PC-3 (cell line): ENCODE measurements at regions of chr11 and their contacts with region 1.

Region 1: GRCh38 chr11:31240338-31240904 is 129.1 kb downstream of the DCDC1 start:
- DNase-seq: peak; percentile 63
- ATAC-seq: peak; percentile 71
- H3K4me3 ChIP-seq: no peak overlapping the region
- H3K27ac ChIP-seq: no peak overlapping the region
- H3K4me1 ChIP-seq: no peaks in the 10 kb centered on the region
- H3K27me3 ChIP-seq: peaks cover 13% of the 10 kb centered on the region
- CTCF ChIP-seq: peak; percentile 75

Region 2: GRCh38 chr11:30917859-30918478 is 322.5 kb before region 1 on chr11:
- CTCF ChIA-PET with region 1: no interaction called
- POLR2A ChIA-PET with region 1: no interaction called
- intact Hi-C with region 1: no loop called
- DNase-seq: peak; percentile 69
- ATAC-seq: peak; percentile 53; the same call in 1 of the 2 replicates
- H3K4me3 ChIP-seq: no peak overlapping the region
- H3K27ac ChIP-seq: no peak overlapping the region
- H3K4me1 ChIP-seq: no peaks in the 10 kb centered on the region
- H3K27me3 ChIP-seq: no peaks in the 10 kb centered on the region; the same call in 1 of the 2 replicates
- CTCF ChIP-seq: peak; percentile 73

Region 3: DNA sequence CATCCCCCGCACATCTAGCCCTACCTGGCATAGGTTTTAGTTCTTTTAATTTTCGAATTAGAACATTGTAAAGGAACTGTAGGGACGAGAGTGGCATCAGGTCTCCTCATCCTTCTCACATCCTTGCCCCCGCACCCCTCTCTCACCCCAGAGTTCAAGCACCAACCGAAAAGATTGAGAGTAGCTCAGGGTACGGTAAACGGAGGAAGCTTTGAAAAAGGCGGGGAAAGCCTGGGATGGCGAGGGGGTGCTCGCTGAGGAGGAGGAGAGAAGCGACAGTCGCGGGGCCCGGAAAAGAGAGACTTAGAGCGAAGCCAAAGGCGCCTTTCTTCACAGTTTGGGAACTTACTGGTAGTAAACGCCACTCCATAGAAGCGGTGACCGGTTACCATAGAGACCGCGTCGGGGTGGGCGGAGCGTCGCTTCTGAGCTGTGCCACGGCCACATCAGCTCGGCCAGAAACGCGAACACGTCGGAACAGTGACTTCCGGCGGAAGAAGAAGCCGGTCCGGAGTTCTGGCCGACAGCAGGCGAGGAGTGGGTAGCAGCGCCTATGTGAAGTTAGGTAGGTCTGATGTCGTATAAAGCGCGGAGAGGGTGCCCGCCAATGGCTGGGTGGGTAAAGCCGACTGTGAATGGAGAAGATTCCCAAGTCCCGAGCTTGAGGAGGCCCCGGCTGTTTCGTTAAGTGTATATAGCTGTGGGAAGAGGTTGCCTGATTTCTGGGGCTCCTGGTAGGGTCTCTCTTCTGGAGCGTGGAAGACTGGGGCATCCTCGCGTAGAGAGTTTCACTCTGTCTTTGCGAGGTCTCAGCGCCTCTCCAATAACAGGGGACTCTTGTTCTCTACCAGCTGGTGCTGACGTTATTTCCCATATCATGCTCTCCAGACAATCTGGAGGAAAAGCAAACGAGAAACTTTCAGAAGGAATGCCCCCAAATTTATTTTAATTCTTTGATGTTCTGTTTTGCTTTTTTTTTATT is 129.2 kb after region 1 on chr11 and contains the starts of genes DCDC1 and DNAJC24:
- CTCF ChIA-PET with region 1: no interaction called
- POLR2A ChIA-PET with region 1: interaction called, 3 read pairs
- intact Hi-C with region 1: loop called (anchors 5 kb)
- DNase-seq: peak; percentile 93
- ATAC-seq: peak; percentile 96
- H3K4me3 ChIP-seq: peak within 1 kb of the TSS; percentile 84
- H3K27ac ChIP-seq: no peak within 1 kb of the TSS
- H3K4me1 ChIP-seq: peaks cover 6% of the 10 kb centered on the region
- H3K27me3 ChIP-seq: peaks cover 12% of the 10 kb centered on the region
- CTCF ChIP-seq: no peak
- total RNA-seq, gene DCDC1: 0.75 TPM in 1 of 2 replicates, not detected in the other
- total RNA-seq, gene DNAJC24: 5.6 and 9.3 TPM in 2 replicates

Region 4: DNA sequence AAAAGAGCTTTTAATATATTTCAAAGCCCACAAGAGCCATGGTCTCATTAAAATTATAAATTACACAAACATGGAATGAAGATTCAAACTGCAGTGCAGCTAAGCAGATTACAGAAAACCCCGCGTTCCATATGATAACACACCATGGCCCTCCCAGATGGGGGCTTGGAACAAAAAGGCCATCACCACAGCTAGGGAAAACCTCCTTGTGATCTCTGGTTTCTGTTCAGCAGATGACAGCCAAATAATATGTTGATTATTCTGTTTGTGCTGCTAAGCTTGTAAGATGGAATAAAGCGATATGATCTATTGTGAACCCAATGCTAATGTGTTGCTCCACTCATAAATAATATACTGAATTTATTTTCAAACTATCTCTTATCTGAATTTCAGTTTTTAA is 240.5 kb after region 1 on chr11:
- CTCF ChIA-PET with region 1: no interaction called
- POLR2A ChIA-PET with region 1: no interaction called
- intact Hi-C with region 1: loop called (anchors 5 kb)
- DNase-seq: no peak
- ATAC-seq: no peak
- H3K4me3 ChIP-seq: no peak overlapping the region
- H3K27ac ChIP-seq: no peak overlapping the region
- H3K4me1 ChIP-seq: no peaks in the 10 kb centered on the region
- H3K27me3 ChIP-seq: no peaks in the 10 kb centered on the region
- CTCF ChIP-seq: no peak

Region 5: GRCh38 chr11:31870609-31871309 is 630.3 kb after region 1 on chr11:
- CTCF ChIA-PET with region 1: no interaction called
- POLR2A ChIA-PET with region 1: no interaction called
- intact Hi-C with region 1: loop called (anchors 1 kb)
- DNase-seq: peak; percentile 67
- ATAC-seq: peak; percentile 48
- H3K4me3 ChIP-seq: no peak overlapping the region
- H3K27ac ChIP-seq: no peak overlapping the region
- H3K4me1 ChIP-seq: peaks cover 35% of the 10 kb centered on the region
- H3K27me3 ChIP-seq: no peaks in the 10 kb centered on the region
- CTCF ChIP-seq: peak; percentile 81

Region 6: GRCh38 chr11:32052218-32052617 is 811.8 kb after region 1 on chr11:
- CTCF ChIA-PET with region 1: no interaction called
- POLR2A ChIA-PET with region 1: no interaction called
- intact Hi-C with region 1: loop called (anchors 5 kb)
- DNase-seq: peak; percentile 74
- ATAC-seq: peak; percentile 50
- H3K4me3 ChIP-seq: no peak overlapping the region
- H3K27ac ChIP-seq: no peak overlapping the region
- H3K4me1 ChIP-seq: no peaks in the 10 kb centered on the region
- H3K27me3 ChIP-seq: peaks cover 64% of the 10 kb centered on the region
- CTCF ChIP-seq: peak; percentile 81

Region 7: DNA sequence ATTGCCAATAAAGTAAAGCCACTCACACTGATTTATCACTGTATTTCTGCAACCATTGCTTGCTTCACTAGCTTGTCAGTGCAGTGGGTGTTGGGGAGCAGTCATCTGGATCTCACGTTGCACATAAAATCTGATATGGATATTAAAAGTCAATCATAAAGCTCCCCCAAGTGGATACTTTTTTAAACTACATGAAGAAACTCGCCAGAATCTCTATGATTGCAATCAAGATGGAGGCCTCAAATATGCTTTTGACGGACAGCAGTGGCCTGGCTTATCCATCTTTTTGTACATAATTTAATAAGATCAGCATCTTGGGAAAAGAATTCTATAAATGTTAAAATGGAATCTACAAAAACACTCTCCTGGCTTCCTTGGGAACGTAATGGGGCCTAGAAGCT is 1057.2 kb after region 1 on chr11:
- CTCF ChIA-PET with region 1: no interaction called
- POLR2A ChIA-PET with region 1: no interaction called
- intact Hi-C with region 1: loop called (anchors 10 kb)
- DNase-seq: peak; percentile 72
- ATAC-seq: peak; percentile 58
- H3K4me3 ChIP-seq: no peak overlapping the region
- H3K27ac ChIP-seq: no peak overlapping the region
- H3K4me1 ChIP-seq: no peaks in the 10 kb centered on the region
- H3K27me3 ChIP-seq: no peaks in the 10 kb centered on the region
- CTCF ChIP-seq: peak; percentile 59